ENCODE measurements at regions of chr7 and their contacts with region 1.

Region 1: DNA sequence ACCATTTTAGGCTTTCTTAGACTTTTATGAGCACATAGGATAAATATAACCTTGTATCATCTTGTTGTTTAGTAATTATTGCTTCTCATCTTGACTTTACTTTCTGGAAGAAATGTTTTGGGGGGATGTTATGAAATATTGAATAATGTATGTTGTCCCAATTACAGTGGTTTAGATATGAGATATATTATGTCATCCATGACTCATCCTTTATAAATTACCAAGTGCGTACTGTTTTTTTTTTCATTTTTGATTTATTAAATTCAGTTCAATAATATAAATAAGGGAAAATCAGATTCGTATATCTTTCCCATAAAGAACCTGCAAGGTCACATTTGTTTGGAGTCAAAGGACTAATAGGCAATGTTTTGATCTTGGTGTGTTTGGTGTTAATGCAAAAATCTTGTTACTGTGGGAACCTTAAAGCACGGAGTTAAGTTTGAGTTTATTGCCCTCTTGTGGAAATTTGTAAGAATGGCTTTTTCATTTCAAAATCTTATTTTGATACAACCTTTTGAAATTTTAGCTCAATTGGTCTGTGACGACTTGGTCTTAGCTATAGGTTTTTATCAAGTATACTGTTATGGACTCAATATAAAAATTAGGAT is 108.6 kb downstream of the SRI start:
- DNase-seq: peak; percentile 36
- ATAC-seq: peak; percentile 40; the same call in 1 of the 2 replicates
- H3K4me3 ChIP-seq: no peak overlapping the region
- H3K27ac ChIP-seq: no peak overlapping the region
- H3K4me1 ChIP-seq: no peaks in the 10 kb centered on the region
- H3K27me3 ChIP-seq: no peaks in the 10 kb centered on the region
- CTCF ChIP-seq: peak; percentile 29 to 55 (median 55); a peak in 5 of 6 replicates
- POLR2A ChIP-seq: no peak
- RAD21 ChIP-seq: peak; percentile 79

Region 2: GRCh38 chr7:87312215-87312865 is 798.9 kb before region 1 on chr7:
- CTCF ChIA-PET with region 1: no interaction called
- POLR2A ChIA-PET with region 1: no interaction called
- RAD21 ChIA-PET with region 1: no interaction called
- intact Hi-C with region 1: loop called (anchors 10 kb)
- DNase-seq: peak; percentile 29
- ATAC-seq: peak; percentile 86
- H3K4me3 ChIP-seq: no peak overlapping the region
- H3K27ac ChIP-seq: no peak overlapping the region
- H3K4me1 ChIP-seq: no peaks in the 10 kb centered on the region
- H3K27me3 ChIP-seq: no peaks in the 10 kb centered on the region
- CTCF ChIP-seq: peak; percentile 82 to 99 (median 97)
- POLR2A ChIP-seq: no peak
- RAD21 ChIP-seq: peak; percentile 90

Region 3: DNA sequence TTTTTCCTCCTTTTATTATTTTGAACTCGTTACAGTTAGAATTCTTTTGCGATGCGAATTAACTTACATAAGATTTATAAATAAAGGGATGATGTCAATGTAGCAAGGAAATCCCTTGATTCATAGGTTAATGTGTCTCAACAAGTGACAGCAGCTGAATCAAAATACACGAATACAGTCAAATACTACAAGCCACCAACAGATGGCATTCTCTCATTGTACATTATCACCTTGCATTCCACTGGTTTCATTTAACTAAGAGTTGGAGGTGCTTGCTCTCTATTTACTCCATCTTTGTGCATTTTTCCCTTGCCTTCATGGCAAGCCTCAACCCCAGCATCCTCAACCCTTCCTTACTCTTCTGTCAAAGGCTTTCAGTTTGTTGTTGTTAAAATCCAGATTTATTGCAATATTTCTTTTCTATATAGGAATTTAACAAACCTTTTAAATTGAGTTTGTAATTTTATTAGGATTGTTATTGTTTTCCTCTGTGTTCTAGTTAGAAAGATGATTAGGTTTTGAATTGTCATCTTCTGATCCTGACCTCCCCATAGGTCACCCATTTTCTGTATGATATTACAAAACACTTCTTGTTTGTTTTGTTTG is 313.3 kb before region 1 on chr7:
- CTCF ChIA-PET with region 1: interaction called, 12 read pairs
- POLR2A ChIA-PET with region 1: no interaction called
- RAD21 ChIA-PET with region 1: no interaction called
- intact Hi-C with region 1: loop called (anchors 2 kb)
- DNase-seq: peak; percentile 35
- ATAC-seq: peak; percentile 89
- H3K4me3 ChIP-seq: no peak overlapping the region
- H3K27ac ChIP-seq: no peak overlapping the region
- H3K4me1 ChIP-seq: no peaks in the 10 kb centered on the region
- H3K27me3 ChIP-seq: no peaks in the 10 kb centered on the region
- CTCF ChIP-seq: peak; percentile 43 to 66 (median 59); a peak in 5 of 6 replicates
- POLR2A ChIP-seq: no peak
- RAD21 ChIP-seq: peak; percentile 82

Region 4: DNA sequence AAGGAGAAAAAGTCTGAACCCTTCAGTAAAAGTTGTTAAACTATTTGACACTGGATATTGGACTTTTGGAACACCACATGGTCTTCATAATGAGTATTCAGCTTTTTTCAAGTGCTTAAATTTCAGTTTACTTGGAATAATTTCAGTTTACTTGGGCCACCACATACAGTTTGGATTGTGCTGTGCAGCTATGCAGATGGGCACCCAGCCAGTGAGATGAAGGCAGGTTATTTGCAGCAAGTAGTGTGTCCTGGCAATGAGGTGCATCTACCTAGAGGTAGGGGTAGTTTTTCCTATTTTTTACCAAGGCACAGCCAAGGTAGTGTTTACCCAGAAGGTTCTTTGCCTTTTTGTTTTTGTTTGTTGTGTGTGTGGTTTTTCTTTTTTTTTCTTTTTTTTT is 201.1 kb before region 1 on chr7:
- CTCF ChIA-PET with region 1: no interaction called
- POLR2A ChIA-PET with region 1: no interaction called
- RAD21 ChIA-PET with region 1: no interaction called
- intact Hi-C with region 1: loop called (anchors 10 kb)
- DNase-seq: no peak
- ATAC-seq: no peak
- H3K4me3 ChIP-seq: no peak overlapping the region
- H3K27ac ChIP-seq: no peak overlapping the region
- H3K4me1 ChIP-seq: no peaks in the 10 kb centered on the region
- H3K27me3 ChIP-seq: no peaks in the 10 kb centered on the region
- CTCF ChIP-seq: no peak
- POLR2A ChIP-seq: no peak
- RAD21 ChIP-seq: no peak

Region 5: GRCh38 chr7:87933945-87934698 is 177.1 kb before region 1 on chr7 and contains the start of gene ADAM22:
- CTCF ChIA-PET with region 1: interaction called, 3 read pairs
- POLR2A ChIA-PET with region 1: no interaction called
- RAD21 ChIA-PET with region 1: no interaction called
- intact Hi-C with region 1: loop called (anchors 1 kb)
- DNase-seq: peak; percentile 87
- ATAC-seq: peak; percentile 97
- H3K4me3 ChIP-seq: peak within 1 kb of the TSS; percentile 79 to 81
- H3K27ac ChIP-seq: peak within 1 kb of the TSS; percentile 46; the same call in 1 of the 2 replicates
- H3K4me1 ChIP-seq: peaks cover 3 to 12% of the 10 kb centered on the region in 2 experiments; a peak in 3 of 4 replicates
- H3K27me3 ChIP-seq: no peaks in the 10 kb centered on the region
- CTCF ChIP-seq: no peak
- POLR2A ChIP-seq: peak; percentile 62
- RAD21 ChIP-seq: no peak; the same call in 1 of the 2 replicates
- total RNA-seq, gene ADAM22: 10.0 TPM

Region 6: DNA sequence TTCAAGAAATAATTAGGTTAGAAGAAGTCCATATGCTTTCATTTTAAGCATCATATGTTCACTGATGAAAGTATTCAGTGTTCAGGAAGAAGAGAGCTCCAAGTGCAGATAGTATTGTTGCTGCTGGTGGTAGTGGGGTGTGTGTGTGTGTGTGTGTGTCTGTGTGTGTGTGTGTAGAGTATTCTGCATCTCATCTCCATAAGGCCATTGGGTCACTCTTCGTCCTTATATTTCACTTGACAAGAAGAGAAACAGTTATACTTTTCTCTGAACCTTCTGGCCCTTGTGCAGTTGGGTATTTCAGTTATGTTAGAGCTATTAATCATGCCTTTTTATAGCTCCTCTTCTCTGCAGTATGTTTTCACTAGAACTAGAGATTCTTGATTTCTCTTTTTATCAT is 151.0 kb before region 1 on chr7:
- CTCF ChIA-PET with region 1: no interaction called
- POLR2A ChIA-PET with region 1: no interaction called
- RAD21 ChIA-PET with region 1: no interaction called
- intact Hi-C with region 1: no loop called
- DNase-seq: no peak
- ATAC-seq: no peak
- H3K4me3 ChIP-seq: no peak overlapping the region
- H3K27ac ChIP-seq: no peak overlapping the region
- H3K4me1 ChIP-seq: no peaks in the 10 kb centered on the region
- H3K27me3 ChIP-seq: no peaks in the 10 kb centered on the region
- CTCF ChIP-seq: no peak
- POLR2A ChIP-seq: no peak
- RAD21 ChIP-seq: no peak

Measured in HCT116 (cell line).